Activated CD4-positive, alpha-beta T cell treated with anti-CD3 and anti-CD28 coated beads for 36 hours (primary cell): ENCODE measurements at regions of chr13 and their contacts with region 1.

Region 1: GRCh38 chr13:31161828-31162590 is at the start of gene HSPH1:
- DNase-seq: peak; percentile 99
- ATAC-seq: peak; percentile 91
- H3K4me3 Mint-ChIP-seq: peak within 1 kb of the TSS; percentile 88
- H3K27ac Mint-ChIP-seq: peak within 1 kb of the TSS; percentile 100
- H3K4me1 Mint-ChIP-seq: peaks cover 31% of the 10 kb centered on the region
- H3K27me3 Mint-ChIP-seq: no peaks in the 10 kb centered on the region
- total RNA-seq, gene HSPH1: 229 to 259 TPM

Region 2: GRCh38 chr13:29595380-29596063 is 1566.5 kb before region 1 on chr13 and contains the start of gene SLC7A1:
- CTCF ChIA-PET with region 1: no interaction called
- POLR2A ChIA-PET with region 1: no interaction called
- intact Hi-C with region 1: loop called in 1 of 2 experiments (anchors 1 kb)
- DNase-seq: peak; percentile 92
- ATAC-seq: peak; percentile 88
- H3K4me3 Mint-ChIP-seq: peak within 1 kb of the TSS; percentile 90
- H3K27ac Mint-ChIP-seq: peak within 1 kb of the TSS; percentile 95
- H3K4me1 Mint-ChIP-seq: peaks cover 36% of the 10 kb centered on the region
- H3K27me3 Mint-ChIP-seq: no peaks in the 10 kb centered on the region
- total RNA-seq, gene SLC7A1: 91.1 to 126 TPM

Region 3: DNA sequence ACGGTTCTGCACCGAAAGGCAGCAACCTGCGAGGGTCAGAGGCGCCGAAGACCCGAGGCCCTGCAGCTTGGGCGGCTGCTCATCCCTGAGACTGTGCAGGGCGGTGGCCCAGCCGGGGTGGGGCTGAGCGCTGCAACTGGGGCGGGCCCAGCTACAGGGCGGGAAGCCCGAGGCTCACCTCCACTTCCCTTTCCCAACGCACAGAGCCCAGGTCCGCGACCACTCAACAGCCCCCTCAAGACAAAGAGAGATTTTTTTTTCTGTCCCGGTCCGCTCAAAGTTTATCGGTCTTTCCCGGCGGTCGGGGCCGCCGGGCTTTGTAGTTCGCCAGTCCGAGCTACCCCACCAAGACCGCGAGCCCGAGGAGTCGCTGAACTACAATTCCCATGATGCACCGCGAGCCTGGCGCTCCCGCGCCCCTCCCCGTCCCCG is 855.2 kb before region 1 on chr13:
- CTCF ChIA-PET with region 1: no interaction called
- POLR2A ChIA-PET with region 1: interaction called, 3 read pairs
- intact Hi-C with region 1: loop called in 1 of 2 experiments (anchors 2 kb)
- DNase-seq: peak; percentile 95
- ATAC-seq: peak; percentile 91
- H3K4me3 Mint-ChIP-seq: peak overlapping the region; percentile 80
- H3K27ac Mint-ChIP-seq: peak overlapping the region; percentile 79
- H3K4me1 Mint-ChIP-seq: peaks cover 31% of the 10 kb centered on the region
- H3K27me3 Mint-ChIP-seq: no peaks in the 10 kb centered on the region

Region 4: GRCh38 chr13:30572859-30573275 is 589.1 kb before region 1 on chr13:
- CTCF ChIA-PET with region 1: no interaction called
- POLR2A ChIA-PET with region 1: no interaction called
- intact Hi-C with region 1: no loop called
- DNase-seq: peak; percentile 27
- ATAC-seq: peak; percentile 54
- H3K4me3 Mint-ChIP-seq: peak overlapping the region; percentile 55
- H3K27ac Mint-ChIP-seq: peak overlapping the region; percentile 72
- H3K4me1 Mint-ChIP-seq: peaks cover 40% of the 10 kb centered on the region
- H3K27me3 Mint-ChIP-seq: no peaks in the 10 kb centered on the region

Region 5: GRCh38 chr13:30629527-30629926 is 532.5 kb before region 1 on chr13:
- CTCF ChIA-PET with region 1: no interaction called
- POLR2A ChIA-PET with region 1: no interaction called
- intact Hi-C with region 1: no loop called
- DNase-seq: no peak
- ATAC-seq: no peak
- H3K4me3 Mint-ChIP-seq: no peak overlapping the region
- H3K27ac Mint-ChIP-seq: no peak overlapping the region
- H3K4me1 Mint-ChIP-seq: peaks cover 44% of the 10 kb centered on the region
- H3K27me3 Mint-ChIP-seq: no peaks in the 10 kb centered on the region

Region 6: GRCh38 chr13:31073859-31074718 is 87.9 kb before region 1 on chr13:
- CTCF ChIA-PET with region 1: no interaction called
- POLR2A ChIA-PET with region 1: interaction called, 5 read pairs
- intact Hi-C with region 1: loop called (anchors 1 kb)
- DNase-seq: peak; percentile 76
- ATAC-seq: peak; percentile 89
- H3K4me3 Mint-ChIP-seq: no peak overlapping the region
- H3K27ac Mint-ChIP-seq: no peak overlapping the region
- H3K4me1 Mint-ChIP-seq: peaks cover 14% of the 10 kb centered on the region
- H3K27me3 Mint-ChIP-seq: peaks cover 13% of the 10 kb centered on the region

Region 7: DNA sequence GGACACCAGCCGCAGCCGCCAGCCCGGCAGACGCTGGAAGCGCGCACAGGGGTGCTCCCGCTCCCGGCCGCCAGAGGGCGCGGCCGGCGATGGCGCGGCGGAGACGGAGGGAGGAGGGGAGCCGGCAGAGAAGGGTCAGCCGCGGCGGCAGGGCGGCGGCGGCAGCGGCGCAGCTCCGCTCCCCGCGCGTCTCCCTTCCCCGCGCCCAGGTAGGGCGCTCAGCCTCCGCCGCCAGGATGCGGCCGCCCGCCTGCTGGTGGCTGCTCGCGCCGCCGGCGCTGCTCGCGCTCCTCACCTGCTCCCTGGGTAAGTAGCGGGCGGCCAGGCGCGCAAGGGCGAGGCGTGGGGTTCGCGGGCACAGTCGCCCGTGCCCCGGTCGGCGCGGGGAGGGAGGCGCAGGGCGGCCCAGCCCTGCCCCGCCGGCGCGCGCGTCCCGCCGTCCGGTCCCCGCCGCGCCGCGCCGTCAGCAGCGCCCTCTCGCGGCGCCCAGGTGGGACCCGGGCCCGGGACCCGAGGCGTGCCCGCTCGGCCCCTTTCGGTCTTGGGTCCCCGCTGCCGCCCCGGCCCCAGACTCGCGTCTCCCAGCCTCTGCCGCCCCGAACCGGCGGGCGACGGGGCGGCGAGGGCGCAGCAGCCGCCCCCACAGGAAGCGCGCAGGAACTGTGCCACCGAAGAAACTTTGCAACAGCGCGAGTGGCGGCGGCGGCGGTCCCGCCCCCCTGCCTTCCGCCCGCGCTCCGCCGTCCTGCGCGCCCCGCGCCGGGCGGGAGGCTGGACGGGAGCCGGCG is 38.0 kb after region 1 on chr13 and contains the start of gene B3GLCT:
- CTCF ChIA-PET with region 1: interaction called, 10 read pairs
- POLR2A ChIA-PET with region 1: no interaction called
- intact Hi-C with region 1: loop called (anchors 1 kb)
- DNase-seq: peak; percentile 87
- ATAC-seq: peak; percentile 81
- H3K4me3 Mint-ChIP-seq: peak within 1 kb of the TSS; percentile 71
- H3K27ac Mint-ChIP-seq: peak within 1 kb of the TSS; percentile 58
- H3K4me1 Mint-ChIP-seq: peaks cover 34% of the 10 kb centered on the region
- H3K27me3 Mint-ChIP-seq: no peaks in the 10 kb centered on the region
- total RNA-seq, gene B3GLCT: 2.1 to 2.4 TPM

Region 8: GRCh38 chr13:31733066-31733465 is 571.1 kb after region 1 on chr13:
- CTCF ChIA-PET with region 1: no interaction called
- POLR2A ChIA-PET with region 1: no interaction called
- intact Hi-C with region 1: no loop called
- DNase-seq: no peak
- ATAC-seq: no peak
- H3K4me3 Mint-ChIP-seq: no peak overlapping the region
- H3K27ac Mint-ChIP-seq: no peak overlapping the region
- H3K4me1 Mint-ChIP-seq: no peaks in the 10 kb centered on the region
- H3K27me3 Mint-ChIP-seq: peaks cover 11% of the 10 kb centered on the region

Region 9: DNA sequence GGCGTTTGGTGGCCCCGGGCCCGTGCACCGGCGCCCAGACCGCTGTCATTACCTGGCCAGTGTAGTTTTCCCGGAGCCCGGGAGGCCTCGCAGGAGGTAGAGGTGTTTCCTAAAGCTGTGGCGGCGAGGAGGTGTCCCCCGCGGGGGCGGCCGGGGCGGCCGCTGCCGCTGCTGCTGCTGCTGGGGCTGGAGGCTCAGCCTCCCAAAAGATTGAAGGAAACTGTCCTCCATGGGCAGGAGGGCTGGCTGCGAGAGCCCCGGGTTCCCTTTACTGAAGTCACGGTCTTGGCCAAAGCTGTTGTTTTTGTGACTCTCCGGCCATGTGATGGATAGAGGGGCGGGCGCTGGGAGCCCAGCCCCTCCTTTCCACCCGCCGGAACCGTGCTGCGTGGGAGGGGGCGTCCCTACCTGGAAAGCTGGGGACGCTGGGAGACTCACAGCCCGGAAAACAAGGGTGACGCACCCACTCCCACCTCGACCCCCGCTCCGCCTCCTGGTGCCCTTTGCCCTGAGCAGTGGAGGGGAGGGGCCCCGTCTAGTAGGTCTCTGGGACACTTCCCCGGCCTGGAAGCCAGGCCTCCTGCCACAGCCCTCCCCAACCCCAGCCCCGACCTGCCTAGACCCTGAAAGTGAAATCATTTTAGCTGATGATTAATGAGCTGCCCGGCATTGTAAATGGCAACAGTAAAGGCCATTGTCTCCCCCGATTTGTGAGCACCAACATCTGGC is 1266.0 kb after region 1 on chr13 and contains the start of gene N4BP2L1:
- CTCF ChIA-PET with region 1: no interaction called
- POLR2A ChIA-PET with region 1: no interaction called
- intact Hi-C with region 1: loop called in 1 of 2 experiments (anchors 5 kb)
- DNase-seq: peak; percentile 94
- ATAC-seq: peak; percentile 77
- H3K4me3 Mint-ChIP-seq: peak within 1 kb of the TSS; percentile 86
- H3K27ac Mint-ChIP-seq: peak within 1 kb of the TSS; percentile 94
- H3K4me1 Mint-ChIP-seq: peaks cover 31% of the 10 kb centered on the region
- H3K27me3 Mint-ChIP-seq: no peaks in the 10 kb centered on the region
- total RNA-seq, gene N4BP2L1: 16.1 to 16.5 TPM